Activated CD4-positive, alpha-beta T cell treated with anti-CD3 and anti-CD28 coated beads for 36 hours (primary cell): ENCODE measurements at regions of chr19 and their contacts with region 1.

Region 1: DNA sequence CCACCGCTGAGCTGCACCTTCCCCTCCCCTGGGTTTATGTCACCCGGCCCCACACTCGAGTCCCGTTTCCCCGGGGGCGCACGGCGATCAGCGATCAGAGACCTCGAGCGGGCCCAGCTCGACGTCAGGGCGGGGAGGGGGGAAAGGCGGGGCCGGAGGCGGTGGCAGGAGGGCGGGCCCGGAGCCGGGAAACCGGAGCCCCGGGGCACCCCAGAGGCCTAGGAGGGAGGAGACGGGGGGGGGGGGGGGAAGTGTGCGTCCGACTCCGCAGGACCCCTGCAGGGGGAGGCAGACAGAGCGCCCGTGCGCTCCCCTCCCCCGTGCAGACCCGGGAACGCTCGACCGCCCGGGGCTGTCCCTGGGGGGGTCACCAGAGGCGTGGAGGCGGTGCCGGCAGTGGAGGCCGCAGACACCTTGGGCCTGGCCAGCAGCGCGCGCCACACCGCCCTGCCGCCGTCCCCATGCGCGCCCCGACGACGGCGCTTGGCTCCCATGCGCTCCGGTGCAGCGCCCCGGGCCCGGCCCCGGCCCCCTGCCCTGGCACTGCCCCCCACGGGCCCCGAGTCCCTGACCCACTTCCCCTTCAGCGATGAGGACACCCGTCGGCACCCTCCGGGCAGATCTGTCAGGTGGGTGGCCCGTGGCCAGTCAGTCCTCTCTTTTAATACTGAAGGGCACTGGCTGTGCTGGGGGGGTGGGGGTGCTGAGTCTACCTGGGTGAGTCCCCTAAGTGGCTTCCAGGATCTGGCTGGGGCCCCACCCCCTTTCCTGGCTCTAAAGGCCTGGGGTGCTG is 11.8 kb downstream of the PDE4A start:
- DNase-seq: peak; percentile 72
- ATAC-seq: peak; percentile 23
- H3K4me3 Mint-ChIP-seq: peak overlapping the region; percentile 53
- H3K27ac Mint-ChIP-seq: peak overlapping the region; percentile 55
- H3K4me1 Mint-ChIP-seq: peaks cover 38% of the 10 kb centered on the region
- H3K27me3 Mint-ChIP-seq: peaks cover 38% of the 10 kb centered on the region

Region 2: DNA sequence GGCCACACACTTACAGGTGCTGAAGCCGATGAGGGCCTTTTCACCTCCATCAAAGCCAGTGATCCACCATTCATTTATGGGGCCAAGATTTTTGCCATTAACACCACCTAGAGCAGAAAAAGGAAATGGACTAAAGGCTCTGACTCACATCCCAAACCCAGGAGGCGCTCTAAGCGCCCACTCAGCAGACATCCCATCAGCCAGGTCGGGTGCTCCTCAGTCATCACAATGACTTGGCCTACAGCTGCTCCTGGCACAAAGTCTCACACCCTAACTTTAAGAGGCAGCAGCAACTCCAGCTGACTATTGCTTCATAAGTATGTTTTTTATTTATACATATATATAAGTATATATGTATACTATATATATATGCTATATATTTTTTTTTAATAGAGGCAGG is 276.3 kb before region 1 on chr19:
- CTCF ChIA-PET with region 1: no interaction called
- POLR2A ChIA-PET with region 1: no interaction called
- intact Hi-C with region 1: no loop called
- DNase-seq: no peak
- ATAC-seq: no peak
- H3K4me3 Mint-ChIP-seq: no peak overlapping the region
- H3K27ac Mint-ChIP-seq: no peak overlapping the region
- H3K4me1 Mint-ChIP-seq: no peaks in the 10 kb centered on the region
- H3K27me3 Mint-ChIP-seq: no peaks in the 10 kb centered on the region

Region 3: DNA sequence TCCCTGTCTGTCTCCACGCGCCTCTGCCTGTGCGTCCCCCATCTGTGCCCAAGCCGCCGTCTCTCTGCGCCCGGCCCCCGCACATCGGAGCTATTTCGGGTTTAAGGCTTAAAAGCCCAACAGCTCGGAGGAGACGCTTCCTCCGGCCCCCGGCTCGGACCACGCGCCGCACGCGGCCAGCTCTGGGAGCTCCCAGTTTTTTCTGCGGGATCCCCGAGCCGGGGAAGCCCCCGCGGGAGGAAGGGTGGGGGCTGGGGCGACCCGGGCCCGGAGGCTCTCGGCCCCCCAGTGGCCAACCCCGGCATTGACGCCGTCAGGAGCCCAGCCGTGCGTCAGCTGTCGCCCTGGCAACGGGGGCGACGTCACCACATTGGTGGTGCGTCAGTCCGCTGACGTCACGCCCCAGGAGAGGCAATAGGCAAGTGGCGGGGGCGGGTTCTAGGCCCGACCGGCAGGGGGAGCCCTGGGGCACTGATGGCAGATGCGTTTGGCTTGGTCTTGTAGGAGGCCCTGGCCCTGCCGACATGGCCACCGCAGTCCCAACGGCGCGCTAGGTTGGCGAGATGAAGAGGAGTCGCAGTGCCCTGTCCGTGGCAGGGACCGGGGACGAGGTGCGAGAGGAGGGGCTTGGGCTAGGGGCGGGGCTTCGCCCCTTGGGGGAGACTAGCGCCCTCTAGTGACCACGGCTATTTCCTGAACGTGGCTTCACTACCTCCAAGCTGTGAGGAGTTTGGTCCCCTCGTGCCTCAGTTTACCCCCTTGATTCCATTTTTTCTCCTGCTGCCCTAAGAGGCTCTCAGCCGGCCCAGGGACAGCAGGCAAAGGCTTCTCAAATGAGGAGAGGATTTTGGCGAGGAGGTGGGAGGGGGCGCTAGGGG is 15.5 kb before region 1 on chr19:
- CTCF ChIA-PET with region 1: interaction called, 42 read pairs
- POLR2A ChIA-PET with region 1: no interaction called
- intact Hi-C with region 1: no loop called
- DNase-seq: peak; percentile 98
- ATAC-seq: peak; percentile 61
- H3K4me3 Mint-ChIP-seq: peak overlapping the region; percentile 59
- H3K27ac Mint-ChIP-seq: peak overlapping the region; percentile 45
- H3K4me1 Mint-ChIP-seq: peaks cover 51% of the 10 kb centered on the region
- H3K27me3 Mint-ChIP-seq: peaks cover 36% of the 10 kb centered on the region